ENCODE measurements at regions of chr10 and their contacts with region 1.

Region 1: GRCh38 chr10:102904346-102904745 is 13.7 kb upstream of the CNNM2 start:
- DNase-seq: no peak

Region 2: GRCh38 chr10:102835007-102835482 is 69.3 kb before region 1 on chr10:
- intact Hi-C with region 1: loop called (anchors 10 kb)
- DNase-seq: peak; percentile 35 to 91 (median 79)

Measured in head of caudate nucleus (tissue), 42 donors.